ENCODE measurements at regions of chr6 and their contacts with region 1.

Region 1: GRCh38 chr6:158377860-158378259 is 65.6 kb downstream of the TULP4 start:
- DNase-seq: no peak
- ATAC-seq: peak in 1 of 2 donors; percentile 9
- H3K4me3 ChIP-seq: no peak overlapping the region
- H3K27ac ChIP-seq: peak overlapping the region; percentile 67 to 76 (median 70)
- H3K4me1 ChIP-seq: peaks cover 37 to 51% of the 10 kb centered on the region in 2 donors
- H3K27me3 ChIP-seq: no peaks in the 10 kb centered on the region
- CTCF ChIP-seq: no peak
- POLR2A ChIP-seq: no peak

Region 2: DNA sequence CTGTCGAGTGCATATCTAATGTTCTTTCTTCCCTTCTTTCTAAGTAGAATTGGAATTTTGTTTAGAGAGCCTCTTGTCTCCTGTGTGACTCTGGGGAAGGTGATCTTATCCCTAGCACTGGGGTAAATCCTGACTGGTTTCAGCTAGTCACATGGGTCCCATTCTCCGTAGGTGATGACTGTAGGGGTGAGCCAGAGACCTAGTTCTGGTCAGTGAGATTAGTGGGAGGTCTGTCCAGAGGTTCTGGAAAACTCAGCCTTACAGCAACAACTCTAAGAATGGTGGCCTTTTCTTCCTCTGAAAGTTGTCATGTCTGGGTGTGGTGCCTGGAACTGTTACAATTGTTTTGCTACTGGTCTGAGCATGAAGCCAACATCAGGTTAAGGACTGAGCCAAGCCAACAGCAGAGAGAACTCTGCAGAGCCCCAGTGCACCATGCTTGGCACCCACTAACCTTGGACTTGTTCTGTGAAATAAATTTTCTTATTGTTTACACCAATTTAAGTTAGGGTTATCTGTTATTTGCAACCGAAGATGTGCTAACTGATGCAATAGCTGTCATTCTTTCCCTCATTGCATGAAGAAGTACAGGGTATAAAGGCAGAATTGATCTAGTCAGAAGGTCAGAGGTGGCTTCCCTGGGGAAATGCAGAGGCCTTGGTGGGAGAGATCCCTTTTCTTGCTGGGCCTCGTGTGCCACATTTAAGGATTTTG is 122.4 kb before region 1 on chr6:
- in situ Hi-C with region 1: no loop called
- intact Hi-C with region 1: loop called (anchors 10 kb)
- DNase-seq: no peak
- ATAC-seq: peak in 1 of 2 donors; percentile 9
- H3K4me3 ChIP-seq: no peak overlapping the region
- H3K27ac ChIP-seq: peak overlapping the region; percentile 67 to 84 (median 79)
- H3K4me1 ChIP-seq: peaks cover 33 to 45% of the 10 kb centered on the region in 2 donors
- H3K27me3 ChIP-seq: no peaks in the 10 kb centered on the region
- CTCF ChIP-seq: no peak
- POLR2A ChIP-seq: no peak

Region 3: GRCh38 chr6:158621694-158622544 is 244.1 kb after region 1 on chr6:
- in situ Hi-C with region 1: no loop called
- intact Hi-C with region 1: no loop called
- DNase-seq: no peak
- ATAC-seq: no peak
- H3K4me3 ChIP-seq: no peak overlapping the region
- H3K27ac ChIP-seq: no peak overlapping the region
- H3K4me1 ChIP-seq: no peaks in the 10 kb centered on the region
- H3K27me3 ChIP-seq: no peaks in the 10 kb centered on the region
- CTCF ChIP-seq: no peak
- POLR2A ChIP-seq: no peak